Colonic mucosa (tissue), 4 donors: ENCODE measurements at regions of chr10 and their contacts with region 1.

Region 1: DNA sequence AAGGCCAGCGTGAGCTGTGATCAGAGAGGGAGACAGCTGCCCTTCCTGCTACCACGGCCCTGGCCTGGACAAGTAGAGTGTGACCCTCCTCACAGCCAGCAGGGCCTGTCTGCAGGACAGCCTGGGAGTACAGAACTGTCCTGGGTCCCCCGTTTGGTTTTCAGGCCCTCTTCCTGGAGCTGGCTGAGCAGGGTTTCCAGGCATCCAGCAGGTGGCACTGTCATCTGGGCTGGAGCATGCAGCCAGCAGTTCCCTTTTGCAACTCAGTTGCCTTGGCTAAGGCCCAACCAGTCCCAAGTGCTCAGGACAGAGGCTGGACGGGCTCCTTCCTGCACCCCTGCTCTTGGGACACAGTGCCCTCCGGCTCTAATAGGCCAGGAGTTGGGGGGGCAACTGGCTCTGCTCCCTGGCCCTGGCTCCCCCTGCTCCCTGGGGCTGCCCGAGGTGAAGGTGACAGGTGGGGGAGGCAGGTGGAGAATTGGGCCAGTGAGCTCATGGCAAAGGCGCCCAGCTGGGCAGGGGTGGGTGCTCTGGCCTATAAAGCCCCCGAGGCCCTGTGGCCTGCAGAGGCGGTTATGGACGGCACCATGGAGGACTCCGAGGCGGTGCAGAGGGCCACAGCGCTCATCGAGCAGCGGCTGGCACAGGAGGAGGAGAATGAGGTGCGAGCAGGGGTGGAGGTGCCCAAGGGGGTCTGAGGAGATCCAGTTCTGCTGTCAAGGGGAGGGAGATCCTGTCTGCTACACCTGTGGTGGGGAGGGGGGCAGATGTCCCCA is at the start of gene ANKRD2:
- DNase-seq: peak; percentile 73
- H3K4me3 ChIP-seq: no peak within 1 kb of the TSS
- H3K27ac ChIP-seq: no peak within 1 kb of the TSS
- H3K4me1 ChIP-seq: no peaks in the 10 kb centered on the region
- H3K27me3 ChIP-seq: no peaks in the 10 kb centered on the region
- CTCF ChIP-seq: peak; percentile 74
- total RNA-seq, gene ANKRD2: 0.24 TPM in 1 of 2 donors, not detected in the other

Region 2: DNA sequence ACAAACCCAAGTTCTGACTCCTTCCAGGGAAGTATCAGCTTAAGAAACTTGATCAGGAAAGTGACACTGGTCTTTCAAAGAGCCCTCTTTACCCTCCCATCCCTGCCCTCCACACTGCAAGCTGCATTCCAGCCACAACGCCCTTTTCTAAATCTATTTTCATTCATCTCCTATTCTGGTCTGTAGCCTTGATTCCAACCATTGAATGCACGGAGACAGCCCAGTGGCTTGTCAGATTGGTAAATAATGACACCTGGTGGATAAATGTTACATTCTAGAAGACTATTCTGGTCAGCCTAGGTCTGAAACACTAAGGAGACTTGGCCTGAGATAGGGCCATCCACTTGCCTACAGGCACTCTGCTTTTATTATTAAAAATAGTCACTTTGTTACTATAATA is 40.0 kb after region 1 on chr10:
- intact Hi-C with region 1: loop called (anchors 5 kb)
- DNase-seq: no peak
- H3K4me3 ChIP-seq: no peak overlapping the region
- H3K27ac ChIP-seq: no peak overlapping the region
- H3K4me1 ChIP-seq: no peaks in the 10 kb centered on the region
- H3K27me3 ChIP-seq: no peaks in the 10 kb centered on the region
- CTCF ChIP-seq: no peak